GM12878 (cell line): ENCODE measurements at regions of chr7 and their contacts with region 1.

Region 1: GRCh38 chr7:151631968-151632749 is 112.5 kb upstream of the RHEB start:
- DNase-seq: peak; percentile 24
- ATAC-seq: peak; percentile 85
- H3K4me3 ChIP-seq: peak overlapping the region; percentile 87
- H3K27ac ChIP-seq: peak overlapping the region; percentile 90
- H3K4me1 ChIP-seq: peaks cover 9% of the 10 kb centered on the region
- H3K27me3 ChIP-seq: no peaks in the 10 kb centered on the region; a peak in 1 of 4 replicates
- CTCF ChIP-seq: peak; percentile 21 to 67 (median 30); a peak in 4 of 6 replicates
- EP300 ChIP-seq: no peak
- POLR2A ChIP-seq: peak; percentile 78
- RAD21 ChIP-seq: peak; percentile 37; the same call in 1 of the 2 replicates

Region 2: GRCh38 chr7:151368136-151368571 is 264.0 kb before region 1 on chr7:
- CTCF ChIA-PET with region 1: interaction called, 13 read pairs
- POLR2A ChIA-PET with region 1: interaction called, 3 read pairs
- RAD21 ChIA-PET with region 1: interaction called, 7 read pairs
- SMC1A ChIA-PET with region 1: interaction called, 6 read pairs
- in situ Hi-C with region 1: no loop called
- intact Hi-C with region 1: loop called (anchors 5 kb)
- DNase-seq: no peak
- ATAC-seq: peak; percentile 100
- H3K4me3 ChIP-seq: no peak overlapping the region
- H3K27ac ChIP-seq: no peak overlapping the region
- H3K4me1 ChIP-seq: no peaks in the 10 kb centered on the region
- H3K27me3 ChIP-seq: no peaks in the 10 kb centered on the region
- CTCF ChIP-seq: peak; percentile 86 to 95 (median 88)
- EP300 ChIP-seq: no peak
- POLR2A ChIP-seq: no peak
- RAD21 ChIP-seq: peak; percentile 70

Region 3: GRCh38 chr7:151494301-151495284 is 137.6 kb before region 1 on chr7:
- CTCF ChIA-PET with region 1: no interaction called
- POLR2A ChIA-PET with region 1: no interaction called
- RAD21 ChIA-PET with region 1: no interaction called
- SMC1A ChIA-PET with region 1: no interaction called
- in situ Hi-C with region 1: no loop called
- intact Hi-C with region 1: no loop called
- DNase-seq: no peak
- ATAC-seq: peak; percentile 19; the same call in 2 of the 3 replicates
- H3K4me3 ChIP-seq: no peak overlapping the region
- H3K27ac ChIP-seq: peak overlapping the region; percentile 33; the same call in 1 of the 2 replicates
- H3K4me1 ChIP-seq: peaks cover 17% of the 10 kb centered on the region
- H3K27me3 ChIP-seq: no peaks in the 10 kb centered on the region
- CTCF ChIP-seq: no peak
- EP300 ChIP-seq: no peak
- POLR2A ChIP-seq: no peak
- RAD21 ChIP-seq: no peak

Region 4: DNA sequence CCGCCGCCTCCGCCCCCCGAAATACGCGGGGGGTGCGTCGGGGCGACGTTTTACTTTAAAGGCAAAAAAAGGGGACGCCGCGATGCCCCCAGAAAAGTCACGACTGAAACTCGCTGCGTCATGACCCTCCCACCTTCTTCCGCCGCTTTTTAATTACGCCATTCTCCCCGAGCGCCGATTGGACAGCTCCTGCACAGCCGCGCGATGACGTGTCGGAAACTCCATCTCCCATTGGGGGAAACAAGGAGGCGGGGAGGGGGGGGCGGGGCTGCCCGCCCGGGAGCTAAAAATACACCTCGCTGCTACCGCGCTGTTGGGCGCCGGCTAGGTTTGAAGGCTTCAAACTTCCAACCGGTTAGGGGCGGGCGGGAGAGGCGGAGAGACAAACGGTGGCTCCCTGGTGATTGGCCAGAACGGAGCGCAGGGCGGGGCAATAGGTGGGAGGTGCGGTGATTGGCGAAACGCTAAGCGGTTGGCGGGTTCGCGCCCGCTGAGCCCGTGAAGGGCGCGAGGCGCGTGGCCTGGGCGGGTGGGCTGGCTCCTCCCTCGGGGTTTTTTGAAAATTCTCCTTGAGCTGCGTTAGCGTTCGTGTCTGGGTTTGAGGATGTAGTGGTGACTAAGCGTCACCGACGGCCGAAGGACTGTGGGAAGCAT is 112.3 kb before region 1 on chr7 and contains the start of gene RHEB:
- CTCF ChIA-PET with region 1: interaction called, 6 read pairs
- POLR2A ChIA-PET with region 1: interaction called, 18 read pairs
- RAD21 ChIA-PET with region 1: interaction called, 38 read pairs
- SMC1A ChIA-PET with region 1: interaction called, 15 read pairs
- in situ Hi-C with region 1: no loop called
- intact Hi-C with region 1: loop called (anchors 1 kb)
- DNase-seq: peak; percentile 93
- ATAC-seq: peak; percentile 91
- H3K4me3 ChIP-seq: peak within 1 kb of the TSS; percentile 98
- H3K27ac ChIP-seq: peak within 1 kb of the TSS; percentile 91
- H3K4me1 ChIP-seq: peaks cover 7% of the 10 kb centered on the region
- H3K27me3 ChIP-seq: no peaks in the 10 kb centered on the region
- CTCF ChIP-seq: no peak
- EP300 ChIP-seq: no peak
- POLR2A ChIP-seq: peak; percentile 10; the same call in 1 of the 2 replicates
- RAD21 ChIP-seq: no peak
- polyA plus RNA-seq, gene RHEB: 6.2 to 10.0 TPM

Region 5: GRCh38 chr7:151570366-151570915 is 61.7 kb before region 1 on chr7:
- CTCF ChIA-PET with region 1: interaction called, 5 read pairs
- POLR2A ChIA-PET with region 1: interaction called, 3 read pairs
- RAD21 ChIA-PET with region 1: interaction called, 7 read pairs
- SMC1A ChIA-PET with region 1: interaction called, 4 read pairs
- in situ Hi-C with region 1: no loop called
- intact Hi-C with region 1: loop called (anchors 2 kb)
- DNase-seq: no peak
- ATAC-seq: no peak
- H3K4me3 ChIP-seq: no peak overlapping the region
- H3K27ac ChIP-seq: no peak overlapping the region
- H3K4me1 ChIP-seq: no peaks in the 10 kb centered on the region
- H3K27me3 ChIP-seq: no peaks in the 10 kb centered on the region
- CTCF ChIP-seq: peak; percentile 23 to 44 (median 34); a peak in 3 of 6 replicates
- EP300 ChIP-seq: no peak
- POLR2A ChIP-seq: no peak
- RAD21 ChIP-seq: peak; percentile 65

Region 6: DNA sequence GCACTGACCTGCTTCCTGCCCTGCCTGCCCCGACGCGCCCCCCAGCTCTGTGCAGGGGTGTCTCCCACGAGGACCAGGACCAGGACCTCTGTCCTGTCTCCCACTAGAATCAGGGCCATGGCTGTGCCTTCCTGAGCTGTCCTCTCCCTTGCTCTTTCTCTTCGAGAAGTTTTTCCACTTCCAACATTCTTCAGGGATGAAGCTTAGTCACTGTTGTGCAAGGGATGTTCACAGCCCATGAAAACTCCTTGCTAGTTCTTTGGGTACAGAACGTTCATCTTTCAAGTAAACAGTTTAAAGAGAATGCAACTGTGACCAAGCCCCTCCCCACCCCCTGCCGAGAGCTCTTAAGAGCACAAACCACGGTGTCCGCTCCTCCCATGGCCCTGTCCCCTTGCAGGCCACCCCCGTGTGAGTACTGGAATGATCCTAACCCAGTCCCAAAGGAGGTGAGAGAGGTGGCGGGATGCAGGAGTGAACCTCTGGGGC is 48.6 kb after region 1 on chr7:
- CTCF ChIA-PET with region 1: no interaction called
- POLR2A ChIA-PET with region 1: no interaction called
- RAD21 ChIA-PET with region 1: no interaction called
- SMC1A ChIA-PET with region 1: no interaction called
- in situ Hi-C with region 1: no loop called
- intact Hi-C with region 1: no loop called
- DNase-seq: no peak
- ATAC-seq: no peak
- H3K4me3 ChIP-seq: no peak overlapping the region
- H3K27ac ChIP-seq: no peak overlapping the region
- H3K4me1 ChIP-seq: no peaks in the 10 kb centered on the region
- H3K27me3 ChIP-seq: no peaks in the 10 kb centered on the region; a peak in 1 of 4 replicates
- CTCF ChIP-seq: no peak
- EP300 ChIP-seq: no peak
- POLR2A ChIP-seq: no peak
- RAD21 ChIP-seq: no peak

Region 7: GRCh38 chr7:151759591-151760042 is 127.5 kb after region 1 on chr7:
- CTCF ChIA-PET with region 1: interaction called, 6 read pairs
- POLR2A ChIA-PET with region 1: no interaction called
- RAD21 ChIA-PET with region 1: interaction called, 7 read pairs
- SMC1A ChIA-PET with region 1: interaction called, 7 read pairs
- in situ Hi-C with region 1: no loop called
- intact Hi-C with region 1: loop called (anchors 5 kb)
- DNase-seq: no peak
- ATAC-seq: peak; percentile 91
- H3K4me3 ChIP-seq: no peak overlapping the region; the same call in 1 of the 2 replicates
- H3K27ac ChIP-seq: no peak overlapping the region
- H3K4me1 ChIP-seq: no peaks in the 10 kb centered on the region
- H3K27me3 ChIP-seq: no peaks in the 10 kb centered on the region; a peak in 1 of 4 replicates
- CTCF ChIP-seq: peak; percentile 87 to 89 (median 88)
- EP300 ChIP-seq: no peak
- POLR2A ChIP-seq: no peak
- RAD21 ChIP-seq: peak; percentile 94